Right ventricle myocardium inferior (tissue), 1 donor: ENCODE measurements at regions of chr2 and their contacts with region 1.

Region 1: DNA sequence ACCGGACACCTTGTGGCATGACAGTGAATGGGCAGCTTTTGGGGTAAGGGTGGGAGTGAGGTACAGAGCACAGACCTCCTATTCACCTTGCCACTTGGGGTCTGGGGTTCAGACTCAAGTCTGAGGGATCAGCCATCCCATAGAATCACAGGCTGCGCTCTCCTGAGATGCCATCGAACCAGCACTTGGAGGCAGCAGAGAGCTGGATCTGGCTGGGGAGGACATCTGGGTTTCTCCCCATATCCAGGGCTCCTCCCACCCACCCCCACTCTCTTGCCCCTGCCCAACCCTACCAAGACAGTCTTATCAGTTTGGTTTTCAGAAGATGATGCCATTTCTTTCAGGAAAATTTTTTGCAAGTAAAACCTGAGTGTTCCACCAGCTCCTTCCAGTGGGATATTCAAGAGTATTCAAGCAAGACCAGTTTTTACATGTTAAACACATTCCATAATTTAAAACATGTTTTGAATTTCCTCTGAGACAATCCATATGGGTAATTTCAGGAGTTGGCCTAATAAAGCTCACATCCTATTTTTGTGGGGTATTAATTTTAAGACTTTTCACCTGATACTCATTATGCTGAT is 29.2 kb upstream of the TEX44 start:
- DNase-seq: no peak
- ATAC-seq: peak; percentile 83

Region 2: DNA sequence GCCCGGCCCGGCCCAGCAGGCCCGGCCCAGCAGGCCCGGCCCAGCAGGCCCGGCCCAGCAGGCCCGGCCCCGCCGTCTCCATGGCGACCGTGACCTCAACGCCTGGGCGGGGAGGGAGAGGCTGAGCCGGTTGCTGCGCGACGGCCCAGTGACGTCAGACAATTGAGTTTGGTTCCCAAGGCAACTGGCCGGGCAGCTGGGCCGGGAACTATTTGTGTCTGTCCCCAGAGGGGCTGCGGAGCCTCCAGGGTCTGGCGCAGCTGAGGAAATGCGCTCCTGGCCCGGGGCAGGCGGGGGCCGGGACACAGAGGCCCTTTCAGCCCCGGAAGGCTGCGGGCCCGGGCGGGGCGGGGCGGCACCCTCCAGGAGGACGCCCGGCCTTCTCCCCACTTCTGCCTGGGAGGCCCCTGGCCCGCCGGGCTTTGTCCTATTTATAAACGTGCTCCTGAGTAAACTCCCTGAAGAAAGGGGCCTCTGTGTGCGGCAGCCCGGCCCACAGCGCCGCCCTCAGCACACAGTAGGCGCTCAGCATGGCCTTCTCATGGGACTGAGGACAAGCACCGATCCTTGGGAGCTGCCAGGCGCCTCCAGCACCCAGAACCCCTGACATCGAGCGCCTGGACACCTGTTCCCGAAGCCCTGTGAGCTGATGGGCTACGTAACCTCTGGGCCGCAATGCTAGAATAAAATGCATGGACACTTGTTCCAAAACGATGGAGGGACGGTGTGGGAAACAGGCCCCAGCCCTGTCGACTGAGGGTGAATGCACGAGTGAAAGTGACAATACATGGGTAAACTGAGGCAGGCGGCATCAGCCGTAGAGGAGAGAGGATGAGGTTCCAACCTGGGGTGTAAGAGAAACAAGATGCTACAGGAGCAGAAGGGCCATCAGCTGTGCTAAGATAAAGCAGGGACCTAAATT is 41.5 kb after region 1 on chr2:
- intact Hi-C with region 1: loop called (anchors 2 kb)
- DNase-seq: peak; percentile 100
- ATAC-seq: peak; percentile 96